Activated CD4-positive, alpha-beta T cell treated with anti-CD3 and anti-CD28 coated beads for 36 hours (primary cell): ENCODE measurements at regions of chr19 and their contacts with region 1.

Region 1: DNA sequence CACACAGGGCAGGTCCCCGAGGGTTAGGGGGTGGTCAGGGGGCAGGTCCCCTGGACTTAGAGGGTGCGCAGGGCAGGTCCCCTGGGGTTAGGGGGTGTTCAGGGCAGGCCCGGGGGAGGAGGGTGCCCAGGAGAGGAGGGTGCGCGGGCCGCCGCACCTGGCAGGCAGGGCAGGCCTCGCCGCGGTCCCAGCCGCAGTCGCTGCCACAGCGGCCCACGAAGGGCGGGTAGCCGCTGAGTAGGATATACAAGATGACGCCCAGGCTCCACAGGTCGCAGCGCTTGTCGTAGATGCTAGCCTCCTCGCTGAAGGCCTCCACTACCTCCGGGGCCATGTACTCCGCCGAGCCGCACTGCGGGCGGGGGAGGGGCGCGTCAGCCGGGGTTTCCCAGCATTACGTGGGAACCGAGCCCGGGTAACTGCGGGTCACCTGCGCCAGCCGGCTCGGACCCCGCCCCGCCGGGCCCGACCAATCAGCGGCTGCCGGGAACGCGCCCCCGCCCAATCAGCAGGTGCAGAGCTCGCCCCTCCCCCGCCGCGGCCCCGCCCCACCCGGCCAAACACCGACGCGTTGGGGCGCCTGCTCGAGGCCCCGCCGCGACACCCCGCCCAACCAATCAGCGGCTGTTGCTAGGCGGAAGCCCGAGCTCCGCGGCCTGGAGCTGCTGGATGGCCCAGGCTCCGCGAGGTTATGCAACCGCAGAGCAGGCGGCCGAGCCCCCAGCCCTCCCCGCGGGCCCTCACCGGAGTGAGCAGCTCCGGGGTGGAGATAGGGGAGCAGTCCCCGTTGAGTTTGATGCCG is 9.2 kb downstream of the MKNK2 start:
- DNase-seq: peak; percentile 100
- ATAC-seq: peak; percentile 88
- H3K4me3 Mint-ChIP-seq: peak overlapping the region; percentile 73
- H3K27ac Mint-ChIP-seq: peak overlapping the region; percentile 88
- H3K4me1 Mint-ChIP-seq: peaks cover 17% of the 10 kb centered on the region
- H3K27me3 Mint-ChIP-seq: no peaks in the 10 kb centered on the region

Region 2: DNA sequence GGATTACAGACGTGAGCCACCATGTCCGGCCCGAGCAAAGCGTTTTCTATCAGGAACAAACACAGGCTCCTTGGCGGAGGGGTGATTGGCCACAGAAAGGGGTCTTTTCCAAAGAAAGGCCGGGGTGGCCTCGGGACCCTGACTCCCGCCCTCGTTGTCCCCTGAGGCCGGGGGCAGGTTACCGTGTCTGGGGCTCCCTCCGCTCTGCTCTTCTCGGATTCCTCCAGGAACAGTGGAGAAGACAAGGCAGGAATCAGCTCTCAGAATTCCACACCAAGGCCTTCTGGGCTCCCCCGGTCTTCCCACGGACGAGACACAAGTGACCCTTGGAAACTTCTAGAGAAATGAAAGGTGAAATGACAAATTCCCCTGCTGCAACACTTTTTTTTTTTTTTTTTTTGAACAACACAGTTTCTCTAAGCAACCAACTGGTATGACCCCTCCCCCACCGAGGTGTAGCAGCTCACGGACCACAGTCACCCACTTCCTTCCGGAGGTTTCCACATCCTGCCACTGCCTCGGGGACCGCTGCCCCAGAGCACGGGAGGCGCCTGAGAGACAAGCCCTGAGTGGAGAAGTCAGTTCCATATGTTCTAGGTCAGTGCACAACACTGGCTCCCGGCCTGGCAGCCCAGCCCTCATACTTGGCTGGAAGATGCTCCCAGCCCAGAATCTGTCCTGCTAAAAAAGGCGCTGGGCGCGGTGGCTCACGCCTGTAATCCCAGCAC is 43.3 kb after region 1 on chr19:
- CTCF ChIA-PET with region 1: no interaction called
- POLR2A ChIA-PET with region 1: interaction called, 4 read pairs
- intact Hi-C with region 1: loop called in 1 of 2 experiments (anchors 2 kb)
- DNase-seq: peak; percentile 97
- ATAC-seq: peak; percentile 64
- H3K4me3 Mint-ChIP-seq: peak overlapping the region; percentile 96
- H3K27ac Mint-ChIP-seq: peak overlapping the region; percentile 99
- H3K4me1 Mint-ChIP-seq: peaks cover 57% of the 10 kb centered on the region
- H3K27me3 Mint-ChIP-seq: no peaks in the 10 kb centered on the region